Cardiac septum (tissue), 1 donor: ENCODE measurements at regions of chr3 and their contacts with region 1.

Region 1: GRCh38 chr3:14508961-14509795 is 31.0 kb downstream of the GRIP2 start:
- DNase-seq: peak; percentile 86

Region 2: DNA sequence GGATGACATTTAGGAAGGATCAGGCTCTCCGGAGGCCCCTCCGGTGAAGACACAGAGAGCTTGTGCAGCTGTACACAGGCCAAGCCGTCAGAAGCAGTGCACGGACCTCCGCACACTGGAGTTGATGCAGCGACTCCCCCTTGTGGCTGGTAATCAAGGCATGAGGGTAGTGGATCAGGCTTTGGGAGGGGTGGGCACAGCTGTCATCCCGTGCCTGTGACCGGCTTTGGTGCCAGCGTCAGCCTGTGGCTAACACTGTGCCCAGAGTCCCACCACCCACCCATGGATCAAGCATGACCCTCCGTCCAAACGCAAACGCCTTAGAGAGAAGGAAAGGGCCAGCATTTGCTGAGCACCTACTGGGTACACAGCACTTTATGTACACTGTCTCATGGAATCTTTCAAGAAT is 39.1 kb after region 1 on chr3:
- intact Hi-C with region 1: loop called (anchors 1 kb)
- DNase-seq: no peak

Region 3: GRCh38 chr3:14602006-14602803 is 93.0 kb after region 1 on chr3:
- intact Hi-C with region 1: loop called (anchors 5 kb)
- DNase-seq: no peak

Region 4: GRCh38 chr3:14780927-14781507 is 271.8 kb after region 1 on chr3:
- intact Hi-C with region 1: loop called (anchors 10 kb)
- DNase-seq: peak; percentile 76

Region 5: DNA sequence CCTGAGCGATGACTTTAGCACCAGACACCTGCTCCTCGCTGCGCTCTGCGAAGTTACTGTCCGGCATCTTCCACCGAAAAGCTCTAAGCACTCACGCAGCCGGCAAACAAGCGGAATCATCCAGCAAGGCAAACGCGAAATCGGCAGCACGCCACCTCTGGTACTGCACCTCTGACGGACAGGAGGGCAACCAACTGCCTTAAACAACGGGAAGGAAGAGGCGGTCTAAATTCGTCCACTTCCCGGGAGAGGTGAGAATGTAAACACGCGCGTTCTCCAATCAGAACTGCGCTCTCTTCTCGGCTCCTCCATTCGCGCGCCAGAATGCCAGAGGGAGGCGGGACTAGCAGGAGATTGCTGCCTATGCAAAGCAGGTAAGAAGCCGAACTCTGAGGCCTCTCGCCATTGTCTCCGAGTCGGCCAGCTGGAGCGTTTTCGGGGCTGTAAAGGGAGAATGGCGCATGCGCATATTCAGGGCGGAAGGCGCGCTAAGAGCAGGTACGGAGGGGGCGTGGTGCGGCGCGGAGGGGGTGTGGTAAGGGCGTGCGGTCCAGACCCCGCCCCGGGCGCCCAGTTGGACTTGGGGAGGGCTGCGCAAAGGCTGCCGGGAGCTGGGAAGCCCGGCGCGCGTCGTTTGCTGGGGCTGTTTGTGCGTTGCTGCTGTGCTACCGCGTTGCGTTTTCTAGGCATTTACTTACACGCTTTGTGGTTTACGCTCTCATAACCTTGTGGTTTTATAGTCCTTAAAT is 1092.4 kb after region 1 on chr3 and contains the starts of genes BTD and HACL1:
- intact Hi-C with region 1: no loop called
- DNase-seq: peak; percentile 98
- total RNA-seq, gene BTD: 7.7 TPM
- total RNA-seq, gene HACL1: 12.6 TPM